ENCODE measurements at regions of chr3 and their contacts with region 1.

Region 1: GRCh38 chr3:157239082-157239704 is 79.2 kb upstream of the CCNL1 start:
- DNase-seq: peak; percentile 54
- H3K4me3 Mint-ChIP-seq: no peak overlapping the region
- H3K27ac Mint-ChIP-seq: no peak overlapping the region
- H3K4me1 Mint-ChIP-seq: peaks cover 6% of the 10 kb centered on the region
- H3K27me3 Mint-ChIP-seq: peaks cover 6% of the 10 kb centered on the region

Region 2: GRCh38 chr3:157201648-157202278 is 37.4 kb before region 1 on chr3:
- intact Hi-C with region 1: loop called (anchors 1 kb)
- DNase-seq: no peak
- H3K4me3 Mint-ChIP-seq: no peak overlapping the region
- H3K27ac Mint-ChIP-seq: no peak overlapping the region
- H3K4me1 Mint-ChIP-seq: no peaks in the 10 kb centered on the region
- H3K27me3 Mint-ChIP-seq: peaks cover 18% of the 10 kb centered on the region

Measured in activated T-helper 1 cell treated with anti-CD3 and anti-CD28 coated beads, Interleukin-12 subunit alpha, Interleukin-12 subunit beta, Interleukin-2, Interleukin-4 antibody, amounts not matched to agents 30 ng/mL and 10 ng/mL and 1 ng/mL, durations not matched to agents 14 hours and 24 hours and 36 hours (primary cell).